Esophagus muscularis mucosa (tissue), 4 donors: ENCODE measurements at regions of chr7 and their contacts with region 1.

Region 1: DNA sequence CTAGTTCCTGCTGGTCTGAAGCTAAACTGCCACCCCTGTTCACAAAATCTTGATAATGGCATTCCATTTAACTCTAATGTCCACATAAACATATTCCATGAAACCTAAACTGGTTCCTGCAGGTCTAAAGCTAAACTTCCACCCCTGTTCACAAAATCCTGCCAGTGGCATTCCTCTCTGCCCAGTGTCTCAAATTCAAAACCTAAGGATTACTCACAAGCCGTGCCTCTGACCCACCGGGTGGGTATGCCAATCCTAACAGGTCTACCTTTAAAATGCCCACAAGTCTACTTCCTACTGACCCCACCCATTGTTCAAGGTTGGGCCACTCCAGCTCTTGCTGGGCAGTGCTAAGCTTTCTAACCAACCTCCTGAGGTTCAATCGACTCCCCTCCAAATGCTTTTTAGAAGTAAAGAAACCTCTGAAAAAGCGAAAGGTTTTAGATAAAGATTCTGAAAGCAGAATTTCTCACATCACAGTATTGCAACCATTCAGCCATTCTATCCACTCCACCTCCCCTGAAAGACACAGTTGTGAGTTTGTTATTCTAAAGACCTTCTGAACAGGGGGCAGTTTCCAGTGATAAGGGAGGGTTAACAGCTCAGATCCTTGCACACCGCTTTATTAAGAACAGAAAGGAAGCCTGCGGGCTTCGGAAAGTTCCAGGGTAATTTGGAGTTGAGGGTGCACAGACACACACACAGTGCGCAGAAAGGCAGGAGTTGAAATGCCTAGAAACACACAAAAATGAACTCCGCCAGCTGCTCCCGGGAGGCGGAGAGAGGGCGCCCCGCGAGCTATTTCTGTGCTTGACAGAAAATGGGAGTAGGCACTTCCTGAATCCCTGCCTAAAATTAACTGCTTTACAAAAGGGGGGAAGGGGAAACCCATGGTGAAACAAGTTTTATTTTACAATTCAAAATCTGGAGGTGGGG is 87.7 kb downstream of the TNS3 start:
- DNase-seq: no peak
- H3K4me3 ChIP-seq: peak overlapping the region in 1 of 4 donors; percentile 32
- H3K27ac ChIP-seq: peak overlapping the region in 3 of 4 donors; percentile 9 to 38 (median 13)
- H3K4me1 ChIP-seq: peaks cover 33 to 48% (median 42%) of the 10 kb centered on the region in 4 donors
- H3K27me3 ChIP-seq: no peaks in the 10 kb centered on the region
- CTCF ChIP-seq: no peak
- EP300 ChIP-seq: no peak
- POLR2A ChIP-seq: no peak

Region 2: DNA sequence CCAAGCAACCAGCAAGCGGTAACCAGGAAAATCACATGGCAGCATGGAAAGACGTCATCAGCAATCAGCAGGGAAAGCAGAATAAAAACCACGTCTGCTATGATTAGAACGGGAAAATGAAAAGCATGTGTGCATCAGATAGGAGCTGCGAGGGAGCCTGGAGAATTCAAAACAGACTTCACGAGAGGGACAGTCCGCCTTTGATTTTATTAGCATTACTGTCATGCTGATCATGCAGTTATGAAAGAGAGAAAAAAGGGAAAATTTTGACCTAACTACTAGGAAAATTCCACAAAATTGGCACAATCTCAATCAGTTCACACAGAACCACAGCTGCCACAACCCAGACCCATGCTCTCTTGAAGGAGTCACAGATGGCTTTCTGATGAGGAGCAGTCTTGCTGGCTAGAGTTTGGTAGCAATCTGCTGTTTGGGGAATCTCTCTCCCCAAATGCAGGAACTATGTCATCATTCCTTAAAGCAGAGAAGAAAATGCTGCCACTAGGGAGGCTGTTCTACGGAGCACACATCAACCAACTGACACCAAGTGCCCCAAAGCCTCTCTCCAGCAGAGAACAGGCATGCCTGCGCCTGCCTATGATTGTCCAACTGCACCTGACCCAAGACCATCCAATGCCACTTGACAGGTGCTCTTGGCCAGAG is 208.3 kb before region 1 on chr7:
- intact Hi-C with region 1: loop called (anchors 5 kb)
- DNase-seq: peak; percentile 68
- H3K4me3 ChIP-seq: no peak overlapping the region
- H3K27ac ChIP-seq: peak overlapping the region in 2 of 4 donors; percentile 30 to 40
- H3K4me1 ChIP-seq: peaks cover 0 to 18% (median 0%) of the 10 kb centered on the region in 4 donors
- H3K27me3 ChIP-seq: no peaks in the 10 kb centered on the region
- CTCF ChIP-seq: peak in 1 of 3 experiments; percentile 12
- EP300 ChIP-seq: no peak
- POLR2A ChIP-seq: no peak